MCF 10A (cell line): ENCODE measurements at regions of chr10 and their contacts with region 1.

Region 1: DNA sequence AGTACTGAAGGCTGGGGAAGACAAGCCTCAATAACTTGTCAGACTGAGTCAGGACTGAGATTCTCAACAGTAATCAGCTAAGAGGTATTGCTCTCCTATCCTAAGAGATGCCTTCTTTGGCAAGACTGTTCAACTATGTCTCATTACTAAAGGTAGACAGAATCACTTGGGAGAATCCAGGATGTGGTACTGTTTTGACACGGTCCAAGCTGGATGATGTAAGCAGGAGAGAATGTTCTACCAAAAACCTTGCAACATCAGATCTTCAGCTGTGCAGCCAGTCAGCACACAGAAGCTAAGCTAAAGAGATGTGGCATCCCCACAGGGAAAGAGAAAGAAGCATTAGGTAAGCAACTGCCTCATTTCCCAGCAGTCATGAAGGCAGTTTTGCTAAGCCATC is 391.4 kb downstream of the NRG3 start:
- DNase-seq: peak; percentile 87
- H3K4me3 Mint-ChIP-seq: no peak overlapping the region
- H3K27ac Mint-ChIP-seq: peak overlapping the region; percentile 52
- H3K4me1 Mint-ChIP-seq: peaks cover 61% of the 10 kb centered on the region
- H3K27me3 Mint-ChIP-seq: no peaks in the 10 kb centered on the region
- CTCF ChIP-seq: no peak

Region 2: DNA sequence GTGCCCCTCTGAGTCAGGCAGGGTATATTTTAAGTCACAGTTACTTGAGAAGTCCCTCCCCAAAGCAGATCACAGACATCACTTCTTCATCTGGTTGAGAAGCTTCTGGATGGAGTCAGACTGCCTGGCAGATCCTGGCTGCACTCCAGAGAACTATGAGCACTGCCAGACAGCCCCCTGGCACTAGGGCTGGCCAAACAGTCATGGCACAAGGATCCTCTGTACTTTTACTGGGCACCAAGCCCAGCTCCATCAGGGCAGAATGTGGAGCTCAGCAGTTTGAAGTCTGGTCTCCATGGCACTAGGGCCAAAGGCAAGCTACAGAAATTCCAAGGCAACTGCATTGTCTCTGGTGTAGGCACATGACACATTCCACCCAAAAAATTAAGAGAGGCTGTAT is 229.4 kb before region 1 on chr10:
- CTCF ChIA-PET with region 1: no interaction called
- POLR2A ChIA-PET with region 1: no interaction called
- intact Hi-C with region 1: no loop called
- DNase-seq: peak; percentile 70
- H3K4me3 Mint-ChIP-seq: peak overlapping the region; percentile 23
- H3K27ac Mint-ChIP-seq: peak overlapping the region; percentile 70
- H3K4me1 Mint-ChIP-seq: peaks cover 26% of the 10 kb centered on the region
- H3K27me3 Mint-ChIP-seq: no peaks in the 10 kb centered on the region
- CTCF ChIP-seq: no peak

Region 3: GRCh38 chr10:82252081-82252480 is 14.4 kb before region 1 on chr10:
- CTCF ChIA-PET with region 1: no interaction called
- POLR2A ChIA-PET with region 1: interaction called, 11 read pairs
- intact Hi-C with region 1: loop called (anchors 1 kb)
- DNase-seq: peak; percentile 68
- H3K4me3 Mint-ChIP-seq: no peak overlapping the region
- H3K27ac Mint-ChIP-seq: no peak overlapping the region
- H3K4me1 Mint-ChIP-seq: peaks cover 30% of the 10 kb centered on the region
- H3K27me3 Mint-ChIP-seq: no peaks in the 10 kb centered on the region
- CTCF ChIP-seq: no peak

Region 4: DNA sequence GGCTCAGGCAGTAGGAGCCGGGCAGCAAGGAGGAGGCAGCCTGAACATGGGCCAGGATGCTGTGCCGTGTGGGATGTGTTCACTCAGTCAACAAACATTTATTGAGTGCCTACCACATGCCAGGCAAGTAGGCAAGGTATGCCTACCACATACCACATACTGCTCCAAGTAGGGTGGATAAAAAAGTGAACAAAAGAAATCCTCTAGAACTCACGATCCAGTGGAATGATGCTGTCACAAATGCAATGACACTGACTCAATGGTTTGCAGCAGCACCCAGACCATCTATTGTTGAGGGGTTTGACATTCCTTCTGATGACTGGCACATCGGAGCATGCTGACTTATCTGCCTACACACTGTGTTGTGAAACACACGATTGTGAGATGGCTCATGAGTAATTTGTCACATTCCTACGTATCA is 22.0 kb after region 1 on chr10:
- CTCF ChIA-PET with region 1: no interaction called
- POLR2A ChIA-PET with region 1: interaction called, 5 read pairs
- intact Hi-C with region 1: loop called (anchors 2 kb)
- DNase-seq: peak; percentile 81
- H3K4me3 Mint-ChIP-seq: no peak overlapping the region
- H3K27ac Mint-ChIP-seq: no peak overlapping the region
- H3K4me1 Mint-ChIP-seq: peaks cover 14% of the 10 kb centered on the region
- H3K27me3 Mint-ChIP-seq: no peaks in the 10 kb centered on the region
- CTCF ChIP-seq: no peak